Dorsolateral prefrontal cortex (tissue), 120 donors: ENCODE measurements at regions of chr11 and their contacts with region 1.

Region 1: DNA sequence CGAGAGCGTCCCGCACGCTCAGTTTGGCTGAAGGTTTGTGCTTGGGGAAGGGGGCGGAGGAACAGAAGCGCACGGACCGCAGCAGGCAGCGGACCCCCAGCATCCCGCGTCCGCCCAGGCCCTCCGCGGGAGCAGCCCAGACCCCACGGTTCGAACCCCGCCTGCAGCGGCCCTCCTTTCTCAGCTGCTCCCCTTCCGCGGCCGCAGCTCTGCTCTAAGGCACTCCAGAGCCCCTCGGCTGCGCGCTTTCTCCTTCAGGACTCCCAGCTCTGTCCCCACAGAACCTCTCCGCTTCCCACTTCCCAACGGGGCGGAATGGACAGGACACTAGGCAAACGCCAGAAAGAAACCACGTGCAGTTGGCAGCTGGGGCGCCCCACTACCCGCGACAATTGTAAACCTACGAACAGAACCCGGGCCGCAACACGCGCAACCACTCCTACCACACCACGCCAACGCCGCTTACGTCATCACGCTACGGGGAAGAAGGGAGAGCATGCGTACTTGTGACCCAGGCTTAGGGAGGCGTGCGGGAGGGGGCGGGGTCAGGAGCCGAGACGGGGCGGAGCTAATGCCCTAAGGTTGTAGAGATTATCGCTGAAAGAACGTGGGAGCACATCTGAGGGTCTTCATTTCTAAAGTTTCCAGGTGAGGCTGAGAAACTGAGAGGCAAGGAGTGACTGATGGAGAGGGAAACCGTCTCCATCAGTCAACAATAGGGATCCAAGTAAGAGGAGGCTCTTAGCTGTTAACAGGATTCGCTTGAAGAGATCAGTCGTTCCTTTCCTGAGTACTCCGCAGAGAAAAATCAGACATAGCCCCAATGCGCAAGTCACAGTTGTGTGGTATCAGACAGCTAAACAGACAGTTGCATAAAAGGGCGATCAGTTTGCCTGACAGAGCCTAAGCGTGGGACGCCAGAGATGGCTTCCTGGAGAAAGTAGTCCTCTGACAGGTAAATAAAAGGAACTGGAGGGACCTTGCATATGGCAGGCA is at the start of gene NARS2:
- DNase-seq: peak; percentile 95 to 98 (median 96)
- H3K4me3 ChIP-seq: peak within 1 kb of the TSS; percentile 64 to 100 (median 91)
- H3K27ac ChIP-seq: peak within 1 kb of the TSS in 58 of 59 donors; percentile 2 to 94 (median 82)
- H3K27me3 ChIP-seq: no peaks in the 10 kb centered on the region
- CTCF ChIP-seq: peak in 16 of 56 donors; percentile 5 to 43 (median 18)
- total RNA-seq, gene NARS2: 9.8 to 23.2 (median 15.9) TPM

Region 2: DNA sequence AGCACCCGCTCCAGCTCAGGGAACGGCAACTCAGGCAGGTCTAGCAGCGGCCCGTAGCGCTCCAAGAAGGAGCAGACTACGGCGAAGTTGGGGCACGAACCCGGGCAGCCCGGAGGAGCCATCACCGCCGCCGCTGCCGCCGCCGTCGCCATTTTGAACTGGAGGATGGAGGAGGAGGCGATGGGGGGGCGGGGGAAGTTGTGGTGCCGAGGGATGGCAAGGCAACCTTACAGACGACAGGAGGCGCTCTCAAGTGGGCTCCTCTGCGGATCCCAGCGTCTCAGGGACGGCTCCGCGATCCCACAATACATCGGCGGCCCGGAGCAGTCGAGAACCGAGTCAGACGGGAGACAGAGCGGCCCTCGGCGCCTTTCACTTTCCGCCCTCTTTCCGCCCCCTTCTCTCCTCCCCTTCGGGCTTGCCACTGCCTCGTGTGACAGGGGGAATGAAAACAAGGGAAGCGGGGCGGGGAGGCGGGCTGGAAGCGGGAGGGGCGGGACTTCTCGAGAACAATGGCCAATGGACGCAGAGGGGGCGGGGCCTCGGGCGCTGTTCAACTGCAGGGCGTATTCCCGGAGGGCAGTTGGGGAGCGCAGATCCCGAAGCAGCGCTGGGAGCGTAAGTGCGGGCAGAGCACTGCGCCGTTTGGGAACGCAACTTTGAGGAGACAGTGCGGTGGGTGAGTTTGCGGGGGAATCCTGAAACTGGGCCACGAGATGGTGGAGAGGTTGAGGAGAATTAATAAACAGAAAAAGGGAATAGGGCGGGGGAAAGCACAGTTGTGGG is 753.9 kb before region 1 on chr11 and contains the starts of genes AAMDC and RSF1:
- intact Hi-C with region 1: loop called in 1 of 2 experiments (anchors 10 kb)
- DNase-seq: peak; percentile 96 to 99 (median 99)
- H3K4me3 ChIP-seq: peak within 1 kb of the TSS; percentile 73 to 100 (median 96)
- H3K27ac ChIP-seq: peak within 1 kb of the TSS; percentile 89 to 99 (median 98)
- H3K27me3 ChIP-seq: no peaks in the 10 kb centered on the region
- CTCF ChIP-seq: peak in 55 of 56 donors; percentile 57 to 92 (median 76)
- total RNA-seq, gene AAMDC: 5.4 to 28.0 (median 14.8) TPM
- total RNA-seq, gene RSF1: 75.5 to 116 (median 94.3) TPM

Region 3: DNA sequence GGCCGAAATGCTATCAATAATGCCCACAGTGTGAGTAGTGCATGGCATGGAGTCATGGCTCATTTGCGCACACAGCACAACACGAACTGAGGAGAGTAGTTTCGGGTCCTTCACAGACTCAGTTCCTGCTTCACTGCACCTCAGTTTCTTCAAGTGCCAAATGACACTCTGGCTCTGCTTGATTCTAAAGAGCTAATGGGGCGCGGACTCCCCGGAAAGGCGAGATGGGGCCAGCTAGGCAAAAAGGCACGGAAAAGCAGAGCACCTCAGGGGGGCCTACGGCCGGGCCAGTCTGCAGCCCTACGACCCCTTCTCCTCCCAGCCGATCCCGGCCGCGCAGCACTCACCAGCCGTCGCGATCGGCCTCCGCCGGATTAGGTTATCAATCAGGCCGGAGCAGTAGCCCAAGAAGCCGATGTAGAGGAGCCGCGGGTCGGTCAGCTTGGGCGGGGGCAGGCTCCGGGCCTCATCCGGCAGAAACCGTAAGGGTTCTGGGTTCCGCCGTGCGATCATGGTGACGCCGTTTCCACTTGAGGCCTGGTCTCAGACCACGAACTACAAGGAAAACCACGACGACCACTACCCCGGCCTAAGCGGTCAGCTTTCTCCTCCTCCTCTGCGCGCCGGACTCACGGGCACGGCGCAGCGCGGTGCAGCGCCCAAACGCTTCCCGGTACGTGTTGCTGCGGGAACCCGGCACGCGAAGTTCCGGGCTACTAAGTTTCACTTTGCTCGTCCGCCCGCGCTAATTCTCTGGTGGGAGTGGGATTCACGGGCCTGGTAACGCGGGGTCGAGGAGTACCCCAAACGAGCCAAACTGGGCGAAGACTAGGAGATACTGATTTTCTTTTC is 495.2 kb before region 1 on chr11 and contains the start of gene NDUFC2:
- intact Hi-C with region 1: loop called in 1 of 2 experiments (anchors 10 kb)
- DNase-seq: peak; percentile 65 to 89 (median 78)
- H3K4me3 ChIP-seq: peak within 1 kb of the TSS; percentile 65 to 100 (median 95)
- H3K27ac ChIP-seq: peak within 1 kb of the TSS in 58 of 59 donors; percentile 9 to 94 (median 82)
- H3K27me3 ChIP-seq: no peaks in the 10 kb centered on the region
- CTCF ChIP-seq: peak in 38 of 56 donors; percentile 4 to 58 (median 27)
- total RNA-seq, gene NDUFC2: 96.0 to 258 (median 182) TPM

Region 4: DNA sequence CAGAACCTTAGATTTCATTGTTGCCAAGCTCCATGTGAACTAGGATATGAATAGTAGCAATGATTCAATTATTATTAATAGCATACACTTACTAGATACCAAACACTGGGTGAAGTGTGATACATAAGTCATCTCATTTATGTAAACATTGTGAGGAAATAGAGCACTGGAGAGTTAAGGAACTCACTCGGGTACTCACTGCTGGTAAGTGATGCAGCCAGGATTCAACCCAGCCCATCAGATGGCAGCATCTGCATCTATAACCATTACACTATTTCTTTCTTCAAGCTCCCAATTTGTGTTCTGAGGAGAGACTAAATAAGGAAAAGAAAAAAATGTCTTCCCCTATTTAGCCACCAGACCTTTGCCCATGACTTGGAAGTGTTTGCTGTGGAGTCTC is 425.0 kb before region 1 on chr11:
- intact Hi-C with region 1: loop called in 1 of 2 experiments (anchors 5 kb)
- DNase-seq: peak in 4 of 10 donors; percentile 25 to 61 (median 56)
- H3K4me3 ChIP-seq: no peak overlapping the region
- H3K27ac ChIP-seq: no peak overlapping the region
- H3K27me3 ChIP-seq: no peaks in the 10 kb centered on the region
- CTCF ChIP-seq: peak in 53 of 56 donors; percentile 14 to 73 (median 52)

Region 5: GRCh38 chr11:78525709-78526108 is 49.0 kb before region 1 on chr11:
- intact Hi-C with region 1: no loop called
- DNase-seq: no peak
- H3K4me3 ChIP-seq: no peak overlapping the region
- H3K27ac ChIP-seq: no peak overlapping the region
- H3K27me3 ChIP-seq: no peaks in the 10 kb centered on the region
- CTCF ChIP-seq: no peak

Region 6: GRCh38 chr11:78615719-78616118 is 41.0 kb after region 1 on chr11:
- intact Hi-C with region 1: no loop called
- DNase-seq: no peak
- H3K4me3 ChIP-seq: no peak overlapping the region
- H3K27ac ChIP-seq: no peak overlapping the region
- H3K27me3 ChIP-seq: no peaks in the 10 kb centered on the region
- CTCF ChIP-seq: no peak